Transverse colon (tissue), 4 donors: ENCODE measurements at regions of chr3 and their contacts with region 1.

Region 1: DNA sequence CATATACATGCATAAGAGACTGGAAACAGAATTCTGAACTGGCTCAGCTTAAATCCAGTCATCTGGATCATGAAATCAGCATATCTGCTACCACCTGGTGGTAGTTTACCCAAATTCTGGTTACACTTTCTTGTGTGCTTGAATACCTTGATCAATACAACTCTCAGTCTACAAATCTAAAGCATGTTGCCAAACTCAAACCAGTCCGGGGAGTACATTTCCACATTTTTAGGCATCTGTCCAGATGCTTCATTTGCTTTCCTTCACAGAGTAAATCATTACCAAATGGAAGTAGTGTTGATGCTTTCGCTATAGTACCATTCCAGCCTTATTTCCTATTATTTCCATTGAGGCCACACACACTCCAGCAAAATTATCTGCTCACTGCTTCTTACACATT is 126.4 kb downstream of the P2RY1 start:
- DNase-seq: no peak
- H3K4me3 ChIP-seq: no peak overlapping the region
- H3K27ac ChIP-seq: no peak overlapping the region
- H3K4me1 ChIP-seq: peaks cover 0 to 16% (median 2%) of the 10 kb centered on the region in 4 donors
- H3K27me3 ChIP-seq: no peaks in the 10 kb centered on the region
- CTCF ChIP-seq: peak in 4 of 5 experiments; percentile 26 to 51 (median 44)
- EP300 ChIP-seq: no peak
- POLR2A ChIP-seq: no peak

Region 2: GRCh38 chr3:152480282-152480953 is 480.9 kb before region 1 on chr3:
- in situ Hi-C with region 1: loop called in 1 of 4 experiments (anchors 25 kb)
- intact Hi-C with region 1: no loop called
- DNase-seq: no peak
- H3K4me3 ChIP-seq: no peak overlapping the region
- H3K27ac ChIP-seq: no peak overlapping the region
- H3K4me1 ChIP-seq: no peaks in the 10 kb centered on the region
- H3K27me3 ChIP-seq: no peaks in the 10 kb centered on the region
- CTCF ChIP-seq: no peak
- EP300 ChIP-seq: no peak
- POLR2A ChIP-seq: no peak

Region 3: GRCh38 chr3:152524198-152525140 is 436.9 kb before region 1 on chr3:
- in situ Hi-C with region 1: loop called in 1 of 4 experiments (anchors 25 kb)
- intact Hi-C with region 1: no loop called
- DNase-seq: peak; percentile 38
- H3K4me3 ChIP-seq: no peak overlapping the region
- H3K27ac ChIP-seq: no peak overlapping the region
- H3K4me1 ChIP-seq: no peaks in the 10 kb centered on the region
- H3K27me3 ChIP-seq: no peaks in the 10 kb centered on the region
- CTCF ChIP-seq: peak; percentile 74 to 90 (median 82)
- EP300 ChIP-seq: no peak
- POLR2A ChIP-seq: no peak